Naive thymus-derived CD8-positive, alpha-beta T cell (primary cell): ENCODE measurements at regions of chr4 and their contacts with region 1.

Region 1: DNA sequence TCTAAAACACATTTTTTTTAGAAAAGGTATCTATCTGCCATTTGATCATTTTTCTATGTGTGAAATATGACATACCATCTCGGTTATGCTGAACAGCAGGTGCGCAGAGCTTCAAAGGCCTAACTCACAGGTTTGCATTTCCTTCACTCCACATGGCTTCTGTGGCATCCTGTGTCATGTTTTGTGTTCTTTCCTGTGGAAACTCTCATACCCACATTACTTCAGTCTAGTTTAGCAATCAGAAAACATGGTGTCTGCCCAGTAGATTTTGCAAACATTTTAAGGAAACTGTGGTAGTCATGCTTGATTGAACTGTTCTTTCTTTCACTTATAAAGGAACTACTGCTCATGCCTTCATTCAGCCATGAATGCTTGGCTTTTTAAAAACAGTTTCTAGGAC is 11.3 kb upstream of the ARAP2 start:
- DNase-seq: peak; percentile 13 to 88 (median 68)
- ATAC-seq: peak; percentile 97 to 99
- H3K4me3 Mint-ChIP-seq: peak overlapping the region; percentile 52 to 85 (median 76)
- H3K27ac Mint-ChIP-seq: peak overlapping the region; percentile 74 to 95 (median 90)
- H3K4me1 Mint-ChIP-seq: peaks cover 8 to 47% (median 29%) of the 10 kb centered on the region in 4 donors
- H3K27me3 Mint-ChIP-seq: no peaks in the 10 kb centered on the region

Region 2: DNA sequence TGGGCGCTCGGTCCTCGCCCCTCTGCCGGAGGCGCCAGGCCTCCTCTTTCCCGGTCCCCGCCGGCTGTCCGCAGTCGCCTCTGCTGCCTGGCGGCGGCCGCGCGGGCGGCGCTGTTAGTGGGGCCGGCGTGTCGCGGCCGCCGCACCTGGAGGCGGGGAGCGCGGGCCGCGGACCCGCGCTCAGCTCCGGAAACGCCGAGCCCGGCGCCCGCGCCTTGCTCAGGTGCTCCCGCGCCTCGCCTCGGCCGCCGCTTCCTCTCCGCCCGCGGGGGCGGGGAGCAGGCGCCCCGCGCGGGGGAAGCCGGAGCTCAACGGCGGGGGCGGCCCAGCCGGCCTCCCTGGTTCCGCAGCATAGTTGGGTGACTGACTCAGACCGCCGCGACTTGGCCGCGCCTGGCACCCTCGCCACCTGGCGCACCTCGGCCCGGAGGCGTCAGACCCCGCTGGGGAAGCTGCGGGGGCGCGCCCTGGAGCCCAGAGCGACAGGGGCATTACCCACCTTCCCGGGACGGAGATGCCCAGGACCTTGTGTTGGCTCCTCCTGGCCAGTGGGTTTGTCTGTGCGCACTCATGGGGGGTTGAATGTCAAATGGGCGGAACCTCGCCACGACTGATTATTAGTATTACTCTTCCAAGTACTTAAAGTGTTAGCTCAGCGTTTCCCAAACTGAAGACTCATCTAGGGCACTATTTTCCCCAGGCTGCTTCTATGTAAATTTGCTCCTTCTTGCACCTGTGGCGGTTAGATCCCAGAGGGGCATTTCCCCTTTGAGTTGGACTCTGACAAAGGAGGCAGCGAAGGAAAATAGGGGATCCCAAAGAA is 11.1 kb before region 1 on chr4 and contains the start of gene ARAP2:
- POLR2A ChIA-PET with region 1: interaction called, 99 read pairs
- DNase-seq: peak; percentile 61 to 79 (median 72)
- ATAC-seq: peak; percentile 77 to 79
- H3K4me3 Mint-ChIP-seq: peak within 1 kb of the TSS; percentile 85 to 97 (median 94)
- H3K27ac Mint-ChIP-seq: peak within 1 kb of the TSS; percentile 92 to 97 (median 96)
- H3K4me1 Mint-ChIP-seq: peaks cover 8 to 39% (median 35%) of the 10 kb centered on the region in 4 donors
- H3K27me3 Mint-ChIP-seq: no peaks in the 10 kb centered on the region
- polyA plus RNA-seq, gene ARAP2: 11.2 to 19.0 (median 11.4) TPM

Region 3: GRCh38 chr4:36310793-36311192 is 55.2 kb after region 1 on chr4:
- POLR2A ChIA-PET with region 1: no interaction called
- DNase-seq: peak in 2 of 10 donors; percentile 7 to 23
- ATAC-seq: peak; percentile 30 to 59
- H3K4me3 Mint-ChIP-seq: peak overlapping the region in 7 of 10 donors; percentile 6 to 68 (median 35)
- H3K27ac Mint-ChIP-seq: peak overlapping the region in 4 of 10 donors; percentile 3 to 61 (median 34)
- H3K4me1 Mint-ChIP-seq: peaks cover 11 to 54% (median 17%) of the 10 kb centered on the region in 4 donors
- H3K27me3 Mint-ChIP-seq: peaks cover 0 to 5% (median 0%) of the 10 kb centered on the region in 5 donors

Region 4: GRCh38 chr4:36325499-36325898 is 69.9 kb after region 1 on chr4:
- POLR2A ChIA-PET with region 1: no interaction called
- DNase-seq: peak in 1 of 10 donors; percentile 12
- ATAC-seq: peak; percentile 56 to 72
- H3K4me3 Mint-ChIP-seq: peak overlapping the region in 1 of 10 donors; percentile 20
- H3K27ac Mint-ChIP-seq: peak overlapping the region in 8 of 10 donors; percentile 0 to 77 (median 8)
- H3K4me1 Mint-ChIP-seq: peaks cover 17 to 63% (median 36%) of the 10 kb centered on the region in 4 donors
- H3K27me3 Mint-ChIP-seq: no peaks in the 10 kb centered on the region

Region 5: GRCh38 chr4:36385951-36386571 is 130.5 kb after region 1 on chr4:
- POLR2A ChIA-PET with region 1: no interaction called
- DNase-seq: peak in 9 of 10 donors; percentile 18 to 85 (median 69)
- ATAC-seq: peak; percentile 98
- H3K4me3 Mint-ChIP-seq: peak overlapping the region; percentile 23 to 76 (median 63)
- H3K27ac Mint-ChIP-seq: peak overlapping the region; percentile 90 to 99 (median 95)
- H3K4me1 Mint-ChIP-seq: peaks cover 12 to 34% (median 27%) of the 10 kb centered on the region in 4 donors
- H3K27me3 Mint-ChIP-seq: no peaks in the 10 kb centered on the region